PC-9 (cell line): ENCODE measurements at regions of chr7 and their contacts with region 1.

Region 1: GRCh38 chr7:140417456-140418155 is 13.7 kb downstream of the RAB19 start:
- DNase-seq: no peak
- H3K4me3 ChIP-seq: no peak overlapping the region
- H3K27ac ChIP-seq: no peak overlapping the region
- H3K4me1 ChIP-seq: no peaks in the 10 kb centered on the region
- H3K27me3 ChIP-seq: no peaks in the 10 kb centered on the region
- CTCF ChIP-seq: no peak

Region 2: DNA sequence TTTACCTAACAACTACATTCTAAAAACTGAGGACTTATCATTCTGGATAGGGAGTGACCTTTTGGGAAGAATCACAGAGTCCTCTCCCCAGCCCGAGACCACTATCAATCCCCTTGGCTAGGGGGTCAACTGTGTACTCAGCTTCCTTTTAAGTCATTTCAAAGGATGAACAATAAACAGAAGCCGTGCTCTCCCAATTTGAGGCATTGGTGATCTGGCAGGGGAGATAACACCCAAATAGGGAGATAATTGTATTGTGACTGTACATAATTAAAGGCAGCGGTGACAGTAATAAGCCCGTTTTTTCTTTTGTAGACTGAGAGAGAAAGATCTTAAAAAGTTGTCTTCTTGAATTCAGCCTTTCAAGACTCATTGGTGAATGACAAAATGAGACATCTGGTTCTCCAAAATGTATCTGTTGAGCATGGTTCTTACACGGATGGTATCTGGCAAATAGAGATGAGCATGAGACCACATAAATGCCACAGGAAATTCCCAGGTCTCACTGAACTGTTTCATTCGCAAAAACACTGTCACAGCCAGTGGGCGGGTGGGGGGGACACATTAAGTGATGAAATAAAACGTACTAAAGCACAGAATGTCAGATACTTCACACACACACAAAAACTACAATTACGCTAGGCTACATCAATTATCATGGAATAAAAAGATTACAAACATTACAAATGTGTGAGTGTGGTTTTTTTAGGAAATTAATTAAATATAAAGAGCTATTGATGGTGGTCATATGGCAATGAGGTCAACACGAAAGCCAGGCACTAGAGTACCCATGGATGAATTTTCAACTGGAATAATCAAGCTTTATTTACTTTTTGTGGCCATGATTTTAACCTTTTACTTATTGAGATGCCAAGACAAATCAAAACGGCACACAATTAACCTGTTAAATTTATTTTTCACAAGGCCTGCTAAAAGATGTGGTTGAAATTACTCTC is 748.2 kb before region 1 on chr7:
- CTCF ChIA-PET with region 1: interaction called, 13 read pairs
- POLR2A ChIA-PET with region 1: no interaction called
- intact Hi-C with region 1: no loop called
- DNase-seq: no peak
- H3K4me3 ChIP-seq: no peak overlapping the region
- H3K27ac ChIP-seq: no peak overlapping the region
- H3K4me1 ChIP-seq: peaks cover 5% of the 10 kb centered on the region; the same call in 1 of the 2 replicates
- H3K27me3 ChIP-seq: no peaks in the 10 kb centered on the region
- CTCF ChIP-seq: no peak

Region 3: GRCh38 chr7:140127360-140128127 is 290.1 kb before region 1 on chr7:
- CTCF ChIA-PET with region 1: no interaction called
- POLR2A ChIA-PET with region 1: no interaction called
- intact Hi-C with region 1: no loop called
- DNase-seq: no peak
- H3K4me3 ChIP-seq: no peak overlapping the region
- H3K27ac ChIP-seq: no peak overlapping the region
- H3K4me1 ChIP-seq: no peaks in the 10 kb centered on the region
- H3K27me3 ChIP-seq: no peaks in the 10 kb centered on the region
- CTCF ChIP-seq: no peak

Region 4: DNA sequence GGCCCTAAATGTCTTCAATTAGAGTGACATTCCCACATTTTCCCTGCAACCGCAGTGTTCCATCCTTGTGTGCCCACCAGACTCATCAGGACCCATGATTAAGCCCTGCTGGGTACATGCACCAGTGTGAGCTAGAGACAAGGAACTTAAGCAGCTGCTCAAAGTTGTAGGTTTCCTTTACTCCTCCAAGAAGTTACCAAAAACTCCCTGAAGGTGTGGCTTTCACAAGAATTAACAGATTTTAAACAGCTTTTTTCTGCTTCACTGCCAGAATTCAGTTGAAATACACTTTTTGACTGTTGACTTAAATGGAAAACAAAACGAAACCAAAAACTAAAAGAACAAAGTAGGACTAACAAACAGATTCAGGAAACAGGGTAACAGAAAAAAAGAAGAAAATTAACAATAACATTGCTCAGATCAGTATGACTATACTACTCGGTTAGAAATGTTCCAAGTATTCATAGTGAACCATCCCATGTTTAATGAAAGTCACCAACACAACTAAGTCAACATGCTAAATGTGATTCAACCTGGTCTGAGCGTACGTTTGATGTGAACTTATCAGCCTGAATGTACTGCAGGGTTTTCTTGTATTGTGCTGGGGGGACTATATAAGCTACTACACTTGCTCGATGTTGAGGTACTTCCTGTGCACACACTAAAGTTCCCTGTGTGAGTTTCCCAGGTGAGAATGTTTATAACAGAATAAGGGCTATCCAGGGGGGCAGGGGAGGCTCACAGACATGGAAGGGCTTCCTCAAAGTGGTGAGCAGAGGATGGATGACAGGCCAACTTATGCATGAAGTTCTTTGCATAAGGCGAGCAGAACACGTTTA is 41.5 kb before region 1 on chr7:
- CTCF ChIA-PET with region 1: no interaction called
- POLR2A ChIA-PET with region 1: interaction called, 11 read pairs
- intact Hi-C with region 1: no loop called
- DNase-seq: no peak
- H3K4me3 ChIP-seq: no peak overlapping the region
- H3K27ac ChIP-seq: no peak overlapping the region
- H3K4me1 ChIP-seq: no peaks in the 10 kb centered on the region
- H3K27me3 ChIP-seq: no peaks in the 10 kb centered on the region
- CTCF ChIP-seq: no peak